ENCODE measurements at regions of chr1 and their contacts with region 1.

Region 1: DNA sequence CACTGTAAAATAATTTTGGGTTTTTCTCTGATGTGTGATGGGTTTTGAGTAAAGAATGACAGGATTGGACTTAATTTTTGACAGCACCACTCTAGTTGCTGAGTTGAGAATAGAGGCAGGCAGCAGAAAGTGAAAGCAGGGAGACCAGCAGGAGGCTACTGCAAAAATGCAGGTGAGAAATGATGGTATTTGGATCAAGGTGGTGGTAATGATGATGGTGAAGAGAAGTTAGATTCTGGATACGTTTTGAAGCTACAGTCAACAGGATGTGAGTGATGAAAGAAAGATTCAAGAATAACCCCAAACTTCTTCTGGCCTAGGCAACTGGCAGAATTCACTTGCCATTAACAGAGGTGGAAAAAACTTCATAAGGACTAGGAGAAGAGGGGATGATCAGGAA is 14.8 kb upstream of the AK5 start:
- DNase-seq: no peak
- H3K4me3 ChIP-seq: no peak overlapping the region
- CTCF ChIP-seq: no peak

Region 2: DNA sequence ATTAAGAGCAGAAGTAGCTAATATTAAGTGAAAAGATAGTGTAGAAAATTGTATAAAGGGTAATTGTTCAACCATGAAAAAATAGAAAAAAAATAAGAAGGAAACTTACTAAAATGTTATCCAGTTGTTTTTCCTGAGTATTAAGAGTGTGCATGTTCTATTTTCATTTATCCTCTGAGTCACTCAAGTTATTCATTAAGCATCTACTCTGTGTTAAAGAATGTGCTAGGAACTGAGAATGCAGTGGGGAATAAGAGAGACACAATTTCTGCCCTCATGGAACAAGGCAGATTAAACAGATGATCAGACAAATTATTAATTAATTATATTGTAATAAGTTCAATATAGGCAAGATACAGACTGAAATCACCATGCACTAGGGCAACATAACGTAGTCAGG is 37.0 kb before region 1 on chr1:
- in situ Hi-C with region 1: loop called (anchors 5 kb)
- DNase-seq: no peak
- H3K4me3 ChIP-seq: no peak overlapping the region
- CTCF ChIP-seq: no peak

Measured in astrocyte of the cerebellum (primary cell).